ENCODE measurements at regions of chr18 and their contacts with region 1.

Region 1: GRCh38 chr18:2348003-2348402 is 223.3 kb downstream of the METTL4 start:
- DNase-seq: no peak
- ATAC-seq: no peak
- H3K4me3 ChIP-seq: no peak overlapping the region
- H3K27ac ChIP-seq: no peak overlapping the region
- H3K4me1 ChIP-seq: no peaks in the 10 kb centered on the region
- H3K27me3 ChIP-seq: no peaks in the 10 kb centered on the region; the same call in 1 of the 2 replicates
- CTCF ChIP-seq: no peak
- POLR2A ChIP-seq: no peak
- RAD21 ChIP-seq: no peak

Region 2: GRCh38 chr18:2368102-2368501 is 20.1 kb after region 1 on chr18:
- CTCF ChIA-PET with region 1: no interaction called
- POLR2A ChIA-PET with region 1: no interaction called
- dilution Hi-C with region 1: no loop called
- in situ Hi-C with region 1: no loop called
- intact Hi-C with region 1: loop called (anchors 2 kb)
- DNase-seq: no peak
- ATAC-seq: no peak
- H3K4me3 ChIP-seq: no peak overlapping the region
- H3K27ac ChIP-seq: no peak overlapping the region
- H3K4me1 ChIP-seq: no peaks in the 10 kb centered on the region
- H3K27me3 ChIP-seq: no peaks in the 10 kb centered on the region; the same call in 1 of the 2 replicates
- CTCF ChIP-seq: no peak
- POLR2A ChIP-seq: no peak
- RAD21 ChIP-seq: no peak